ENCODE measurements at regions of chr10 and their contacts with region 1.

Region 1: GRCh38 chr10:110354322-110354766 is 49.6 kb upstream of the SMNDC1 start:
- DNase-seq: peak; percentile 86
- H3K4me3 ChIP-seq: no peak overlapping the region
- H3K27ac ChIP-seq: peak overlapping the region; percentile 34
- H3K4me1 ChIP-seq: peaks cover 24% of the 10 kb centered on the region
- H3K27me3 ChIP-seq: no peaks in the 10 kb centered on the region
- CTCF ChIP-seq: peak; percentile 84 to 96
- POLR2A ChIP-seq: no peak

Region 2: GRCh38 chr10:110137142-110137545 is 217.2 kb before region 1 on chr10:
- CTCF ChIA-PET with region 1: no interaction called
- POLR2A ChIA-PET with region 1: no interaction called
- dilution Hi-C with region 1: no loop called
- intact Hi-C with region 1: no loop called
- DNase-seq: peak; percentile 74
- H3K4me3 ChIP-seq: no peak overlapping the region
- H3K27ac ChIP-seq: no peak overlapping the region
- H3K4me1 ChIP-seq: peaks cover 14% of the 10 kb centered on the region
- H3K27me3 ChIP-seq: no peaks in the 10 kb centered on the region
- CTCF ChIP-seq: peak; percentile 49 to 53
- POLR2A ChIP-seq: no peak

Region 3: DNA sequence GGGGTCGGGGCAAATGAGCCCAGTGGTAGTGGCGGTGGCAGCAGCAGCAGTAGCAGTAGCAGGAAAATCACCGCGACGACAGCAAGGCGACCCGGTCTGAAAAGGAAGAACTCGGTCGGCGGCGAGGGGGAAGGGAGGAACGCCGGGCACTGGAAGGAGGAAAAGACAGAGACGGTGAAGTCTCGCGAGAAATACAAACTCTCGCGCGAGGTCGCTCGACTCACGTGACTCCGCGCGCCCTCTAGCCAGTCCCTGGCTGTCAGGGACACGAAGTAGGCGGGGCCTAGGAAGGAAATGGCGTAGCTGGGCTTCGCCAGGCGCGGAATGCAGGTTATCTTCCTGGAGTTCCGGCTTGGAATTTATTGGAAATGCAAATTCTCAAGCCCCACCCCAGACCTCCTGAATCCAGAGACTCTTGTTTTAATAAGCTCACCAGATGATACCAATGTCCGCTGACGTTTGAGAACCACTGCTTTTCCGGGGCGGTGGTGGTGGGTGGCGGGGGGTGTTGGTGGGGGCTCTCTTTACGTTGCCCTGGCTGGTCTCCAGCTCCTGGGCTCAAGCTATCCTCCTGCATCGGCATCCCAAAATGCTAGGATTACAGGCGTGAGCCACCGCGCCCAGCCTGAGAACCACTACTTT is 49.4 kb before region 1 on chr10 and contains the start of gene SMNDC1:
- CTCF ChIA-PET with region 1: interaction called, 26 read pairs
- POLR2A ChIA-PET with region 1: no interaction called
- dilution Hi-C with region 1: no loop called
- intact Hi-C with region 1: no loop called
- DNase-seq: peak; percentile 99
- H3K4me3 ChIP-seq: peak within 1 kb of the TSS; percentile 95 to 99 (median 99)
- H3K27ac ChIP-seq: peak within 1 kb of the TSS; percentile 97
- H3K4me1 ChIP-seq: peaks cover 47% of the 10 kb centered on the region
- H3K27me3 ChIP-seq: no peaks in the 10 kb centered on the region
- CTCF ChIP-seq: no peak
- POLR2A ChIP-seq: peak; percentile 51
- total RNA-seq, gene SMNDC1: 38.5 and 39.3 TPM in 2 replicates

Region 4: DNA sequence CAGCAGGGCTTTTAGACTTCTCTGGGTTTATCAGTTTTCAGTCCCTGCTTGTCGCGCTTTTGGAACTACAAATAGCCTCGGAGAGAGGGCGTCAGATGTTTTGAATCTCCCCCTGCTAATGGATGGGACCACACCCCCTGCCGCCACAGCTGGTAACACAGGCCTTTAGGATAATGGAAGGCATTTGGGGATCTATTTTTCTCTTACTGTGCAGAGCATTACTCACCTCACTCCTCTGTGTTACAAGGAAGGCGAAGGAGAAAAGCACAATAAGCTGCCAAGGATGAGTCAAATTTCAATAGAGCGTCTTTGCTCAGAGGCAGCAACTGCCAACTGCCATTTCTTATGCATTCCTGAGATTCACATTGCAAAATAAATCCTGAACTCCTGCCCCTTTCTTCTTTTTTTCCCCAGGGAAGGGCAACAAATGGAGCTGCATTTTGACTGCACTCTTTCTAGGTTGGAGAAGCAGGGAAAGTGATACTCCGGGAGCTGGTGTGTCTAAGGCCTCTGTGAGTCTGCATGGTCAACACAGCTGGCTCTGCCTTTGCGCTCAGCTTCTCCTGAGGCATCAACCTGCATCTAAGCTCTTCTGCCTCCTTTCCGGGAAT is 18.1 kb before region 1 on chr10:
- CTCF ChIA-PET with region 1: interaction called, 24 read pairs
- POLR2A ChIA-PET with region 1: no interaction called
- dilution Hi-C with region 1: no loop called
- intact Hi-C with region 1: no loop called
- DNase-seq: peak; percentile 26
- H3K4me3 ChIP-seq: no peak overlapping the region
- H3K27ac ChIP-seq: no peak overlapping the region
- H3K4me1 ChIP-seq: peaks cover 8% of the 10 kb centered on the region
- H3K27me3 ChIP-seq: no peaks in the 10 kb centered on the region
- CTCF ChIP-seq: no peak
- POLR2A ChIP-seq: no peak

Region 5: DNA sequence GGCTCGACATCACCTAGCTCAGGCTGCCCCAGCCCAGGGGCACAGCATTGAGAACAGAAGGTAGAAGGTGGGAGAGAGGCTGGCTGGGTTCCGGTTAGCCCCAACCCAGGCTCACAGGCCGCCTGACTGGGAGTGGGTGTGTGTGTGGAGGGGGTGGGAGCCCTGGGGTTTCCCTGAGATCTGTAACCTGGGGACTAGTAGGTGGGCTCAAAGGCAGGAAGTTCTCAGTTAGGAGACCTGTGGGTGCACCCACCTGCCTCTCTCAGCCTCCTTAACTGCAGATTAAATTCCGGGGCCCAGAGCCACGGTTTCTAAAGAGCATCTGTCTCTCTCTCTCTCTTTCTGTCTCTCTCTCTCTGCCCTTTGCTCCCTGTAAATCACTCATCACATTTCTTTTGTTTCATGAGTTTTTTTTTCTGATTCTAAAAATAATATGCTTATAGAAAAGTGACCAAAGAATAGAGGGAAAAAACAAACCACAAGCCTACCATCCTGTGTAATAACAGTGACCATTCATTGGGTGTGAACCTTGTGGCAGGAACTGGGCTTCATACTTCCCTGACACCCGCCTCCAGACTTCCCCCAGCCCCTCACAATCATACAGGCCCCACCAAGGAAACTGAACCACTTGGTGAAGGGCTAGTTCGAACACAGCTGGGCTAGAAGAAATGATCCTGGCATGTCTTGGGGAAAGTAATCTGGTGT is 33.8 kb after region 1 on chr10:
- CTCF ChIA-PET with region 1: interaction called, 21 read pairs
- POLR2A ChIA-PET with region 1: no interaction called
- dilution Hi-C with region 1: no loop called
- intact Hi-C with region 1: loop called (anchors 1 kb)
- DNase-seq: peak; percentile 90
- H3K4me3 ChIP-seq: no peak overlapping the region
- H3K27ac ChIP-seq: peak overlapping the region; percentile 69
- H3K4me1 ChIP-seq: peaks cover 33% of the 10 kb centered on the region
- H3K27me3 ChIP-seq: no peaks in the 10 kb centered on the region
- CTCF ChIP-seq: no peak
- POLR2A ChIP-seq: no peak

Region 6: DNA sequence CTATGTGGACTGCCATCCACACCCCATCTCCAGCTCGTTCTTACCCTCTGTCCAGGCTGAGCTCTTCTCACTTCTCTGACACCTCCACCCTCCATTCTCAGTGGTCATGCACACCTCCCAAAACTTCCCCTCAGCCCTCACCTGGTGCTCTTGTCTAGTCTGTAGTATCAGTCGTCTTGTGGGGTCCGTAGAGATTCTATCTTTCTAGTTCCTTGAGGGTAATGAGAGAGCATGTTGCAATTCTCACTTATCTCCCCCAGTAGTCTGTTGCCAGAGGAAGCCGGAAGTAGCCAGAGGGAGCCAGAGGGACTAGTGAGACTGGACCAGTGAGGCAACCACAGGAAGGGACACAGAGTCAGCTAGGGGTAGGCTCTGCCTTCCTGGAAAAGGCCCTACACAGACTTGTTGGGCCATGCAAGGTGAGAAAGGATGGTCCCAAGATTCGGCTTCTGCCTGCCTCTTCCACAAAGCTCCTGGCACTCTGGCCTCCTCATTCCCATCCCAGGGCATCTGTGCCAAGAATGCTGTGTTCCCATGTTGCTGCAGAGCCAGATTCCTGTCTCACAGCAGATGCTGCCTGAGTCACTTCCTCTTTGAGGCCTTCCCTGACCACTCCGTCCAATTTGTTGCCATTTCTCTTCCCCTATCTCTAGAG is 92.7 kb after region 1 on chr10:
- CTCF ChIA-PET with region 1: interaction called, 7 read pairs
- POLR2A ChIA-PET with region 1: no interaction called
- dilution Hi-C with region 1: no loop called
- intact Hi-C with region 1: loop called (anchors 2 kb)
- DNase-seq: peak; percentile 87
- H3K4me3 ChIP-seq: no peak overlapping the region
- H3K27ac ChIP-seq: peak overlapping the region; percentile 74
- H3K4me1 ChIP-seq: peaks cover 17% of the 10 kb centered on the region
- H3K27me3 ChIP-seq: no peaks in the 10 kb centered on the region
- CTCF ChIP-seq: no peak
- POLR2A ChIP-seq: no peak

Region 7: GRCh38 chr10:110487411-110488123 is 133.2 kb after region 1 on chr10:
- CTCF ChIA-PET with region 1: interaction called, 268 read pairs
- POLR2A ChIA-PET with region 1: interaction called, 5 read pairs
- dilution Hi-C with region 1: no loop called
- intact Hi-C with region 1: no loop called
- DNase-seq: no peak
- H3K4me3 ChIP-seq: no peak overlapping the region
- H3K27ac ChIP-seq: peak overlapping the region; percentile 10
- H3K4me1 ChIP-seq: peaks cover 26% of the 10 kb centered on the region
- H3K27me3 ChIP-seq: no peaks in the 10 kb centered on the region
- CTCF ChIP-seq: no peak
- POLR2A ChIP-seq: no peak

Region 8: DNA sequence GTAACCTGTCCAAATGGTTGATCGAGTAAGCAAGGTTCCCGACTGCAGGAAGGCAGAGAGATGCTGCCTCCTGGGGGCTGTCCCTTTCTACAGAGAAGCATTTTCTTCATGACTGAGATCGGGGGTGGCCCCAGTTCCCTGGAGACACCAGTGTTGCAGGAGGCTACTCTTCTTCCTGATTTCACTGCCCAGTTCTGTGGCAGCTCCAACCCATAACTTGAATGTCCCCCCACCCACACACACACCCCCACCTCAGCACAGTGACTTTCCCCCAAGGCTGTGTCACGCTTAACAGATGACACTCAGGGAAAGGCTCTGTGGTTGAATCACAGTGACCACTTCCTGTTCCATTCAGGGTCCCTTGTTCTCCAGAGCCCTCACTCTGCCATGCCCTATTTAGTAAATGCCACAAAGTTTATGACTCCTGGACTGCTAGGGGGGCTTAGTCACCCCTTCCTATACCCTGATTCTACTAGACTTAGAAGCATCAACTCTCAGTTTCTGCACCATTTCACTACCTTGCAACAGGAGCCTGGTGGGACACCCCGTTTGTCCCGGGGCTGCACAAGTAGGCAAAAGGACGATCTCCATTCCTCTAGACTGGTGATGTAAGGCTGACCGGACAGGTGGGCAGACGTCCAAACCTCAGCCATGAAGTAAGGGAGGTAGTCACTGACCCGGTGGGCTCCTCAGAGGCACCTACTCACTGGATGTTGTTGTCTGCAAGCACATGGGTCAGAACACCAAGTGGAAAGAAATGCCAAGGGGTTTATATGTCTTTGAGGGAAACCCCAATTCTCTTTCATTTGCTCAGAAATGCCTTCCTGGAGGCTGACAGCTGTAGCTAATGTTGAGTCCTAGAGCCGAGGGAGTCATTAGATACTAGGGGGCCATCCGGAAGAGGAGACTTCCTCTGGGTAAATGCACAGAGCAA is 181.9 kb after region 1 on chr10:
- CTCF ChIA-PET with region 1: interaction called, 12 read pairs
- POLR2A ChIA-PET with region 1: no interaction called
- dilution Hi-C with region 1: no loop called
- intact Hi-C with region 1: no loop called
- DNase-seq: peak; percentile 44
- H3K4me3 ChIP-seq: no peak overlapping the region
- H3K27ac ChIP-seq: no peak overlapping the region
- H3K4me1 ChIP-seq: peaks cover 15% of the 10 kb centered on the region
- H3K27me3 ChIP-seq: no peaks in the 10 kb centered on the region
- CTCF ChIP-seq: peak; percentile 8 to 27
- POLR2A ChIP-seq: no peak

Region 9: DNA sequence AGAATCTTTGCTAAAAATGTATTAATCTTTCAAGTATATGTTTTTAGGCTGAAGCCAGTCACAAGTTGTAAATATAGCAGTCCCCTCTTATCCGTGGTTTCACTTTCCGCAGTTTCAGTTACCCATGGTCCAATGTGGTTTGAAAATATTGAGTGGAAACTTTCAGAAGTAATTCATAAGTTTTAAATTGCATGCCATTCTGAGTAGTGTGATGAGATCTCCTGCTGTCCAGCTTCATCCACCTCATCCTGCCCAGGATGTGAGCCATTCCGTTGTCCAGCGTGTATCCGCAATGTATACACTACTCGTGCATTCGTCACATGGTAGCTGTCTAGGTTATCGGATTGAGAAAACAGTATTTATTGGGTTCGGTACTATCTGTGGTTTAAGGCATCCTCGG is 529.6 kb after region 1 on chr10:
- CTCF ChIA-PET with region 1: no interaction called
- POLR2A ChIA-PET with region 1: no interaction called
- dilution Hi-C with region 1: no loop called
- intact Hi-C with region 1: no loop called
- DNase-seq: no peak
- H3K4me3 ChIP-seq: no peak overlapping the region
- H3K27ac ChIP-seq: no peak overlapping the region
- H3K4me1 ChIP-seq: no peaks in the 10 kb centered on the region
- H3K27me3 ChIP-seq: no peaks in the 10 kb centered on the region
- CTCF ChIP-seq: no peak
- POLR2A ChIP-seq: no peak